ENCODE measurements at regions of chr9 and their contacts with region 1.

Region 1: GRCh38 chr9:87770616-87771315 is 44.8 kb downstream of the CTSL start:
- DNase-seq: no peak
- ATAC-seq: no peak
- H3K4me3 ChIP-seq: no peak overlapping the region
- H3K4me3 Mint-ChIP-seq: no peak overlapping the region
- H3K27ac ChIP-seq: no peak overlapping the region
- H3K27ac Mint-ChIP-seq: no peak overlapping the region
- H3K4me1 ChIP-seq: no peaks in the 10 kb centered on the region
- H3K4me1 Mint-ChIP-seq: no peaks in the 10 kb centered on the region
- H3K27me3 ChIP-seq: peaks cover 0 to 17% of the 10 kb centered on the region in 2 experiments
- H3K27me3 Mint-ChIP-seq: peaks cover 22% of the 10 kb centered on the region
- CTCF ChIP-seq: no peak

Region 2: DNA sequence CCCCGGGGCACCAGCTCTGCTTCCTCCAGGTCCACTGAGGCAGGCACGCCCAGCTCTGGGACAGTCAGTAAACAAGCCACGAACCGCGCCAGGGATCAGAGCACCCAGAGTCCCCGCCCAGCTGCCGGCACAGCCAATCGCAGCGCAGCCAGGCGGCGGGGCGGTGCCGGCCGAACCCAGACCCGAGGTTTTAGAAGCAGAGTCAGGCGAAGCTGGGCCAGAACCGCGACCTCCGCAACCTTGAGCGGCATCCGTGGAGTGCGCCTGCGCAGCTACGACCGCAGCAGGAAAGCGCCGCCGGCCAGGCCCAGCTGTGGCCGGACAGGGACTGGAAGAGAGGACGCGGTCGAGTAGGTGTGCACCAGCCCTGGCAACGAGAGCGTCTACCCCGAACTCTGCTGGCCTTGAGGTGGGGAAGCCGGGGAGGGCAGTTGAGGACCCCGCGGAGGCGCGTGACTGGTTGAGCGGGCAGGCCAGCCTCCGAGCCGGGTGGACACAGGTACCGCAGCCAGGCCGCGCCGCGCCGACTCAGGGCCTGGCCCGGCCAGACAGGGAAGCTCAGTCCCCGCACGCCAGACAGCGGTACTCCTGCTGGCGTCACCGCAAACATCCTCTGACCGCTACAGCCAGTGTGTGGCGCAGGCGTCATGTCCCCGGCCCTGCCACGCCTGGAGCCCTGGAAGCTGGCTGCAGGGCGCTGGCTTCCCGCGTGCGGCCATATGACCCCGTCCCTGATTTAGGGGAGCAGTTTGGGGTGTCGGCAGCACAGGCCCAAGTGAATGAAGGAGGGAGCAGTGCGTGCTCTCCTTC is 44.7 kb before region 1 on chr9 and contains the start of gene CTSL:
- CTCF ChIA-PET with region 1: no interaction called
- POLR2A ChIA-PET with region 1: no interaction called
- intact Hi-C with region 1: no loop called
- DNase-seq: peak; percentile 24 to 82 (median 62)
- ATAC-seq: peak; percentile 83
- H3K4me3 ChIP-seq: peak within 1 kb of the TSS; percentile 73
- H3K4me3 Mint-ChIP-seq: peak within 1 kb of the TSS; percentile 98
- H3K27ac ChIP-seq: peak within 1 kb of the TSS; percentile 25 to 52
- H3K27ac Mint-ChIP-seq: peak within 1 kb of the TSS; percentile 87
- H3K4me1 ChIP-seq: peaks cover 29% of the 10 kb centered on the region
- H3K4me1 Mint-ChIP-seq: peaks cover 59% of the 10 kb centered on the region
- H3K27me3 ChIP-seq: peaks cover 0 to 3% of the 10 kb centered on the region in 2 experiments
- H3K27me3 Mint-ChIP-seq: no peaks in the 10 kb centered on the region
- CTCF ChIP-seq: no peak
- total RNA-seq, gene CTSL: 7.5 to 7.9 TPM

Region 3: GRCh38 chr9:87740209-87740608 is 30.6 kb before region 1 on chr9:
- CTCF ChIA-PET with region 1: no interaction called
- POLR2A ChIA-PET with region 1: no interaction called
- intact Hi-C with region 1: loop called in 1 of 2 experiments (anchors 1 kb)
- DNase-seq: no peak
- ATAC-seq: no peak
- H3K4me3 ChIP-seq: no peak overlapping the region
- H3K4me3 Mint-ChIP-seq: no peak overlapping the region
- H3K27ac ChIP-seq: no peak overlapping the region
- H3K27ac Mint-ChIP-seq: no peak overlapping the region
- H3K4me1 ChIP-seq: no peaks in the 10 kb centered on the region
- H3K4me1 Mint-ChIP-seq: peaks cover 18% of the 10 kb centered on the region
- H3K27me3 ChIP-seq: no peaks in the 10 kb centered on the region
- H3K27me3 Mint-ChIP-seq: no peaks in the 10 kb centered on the region
- CTCF ChIP-seq: no peak

Region 4: DNA sequence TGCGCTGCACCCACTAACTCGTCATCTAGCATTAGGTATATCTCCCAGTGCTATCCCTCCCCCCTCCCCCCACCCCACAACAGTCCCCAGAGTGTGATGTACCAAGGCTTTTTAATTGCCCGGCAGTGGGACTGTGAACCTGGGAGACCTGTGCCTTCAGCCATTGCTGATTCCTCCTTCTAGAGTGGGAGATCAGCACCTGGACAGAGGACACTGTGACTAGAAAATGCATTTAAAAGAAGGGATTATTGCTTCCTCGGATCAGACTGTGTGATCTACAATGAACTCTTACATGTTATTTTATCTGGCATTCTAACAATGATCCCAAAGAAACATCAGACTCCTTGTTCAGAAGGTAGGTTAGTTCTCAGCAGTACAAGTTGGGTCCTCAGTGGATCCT is 18.9 kb before region 1 on chr9:
- CTCF ChIA-PET with region 1: no interaction called
- POLR2A ChIA-PET with region 1: no interaction called
- intact Hi-C with region 1: no loop called
- DNase-seq: no peak
- ATAC-seq: no peak
- H3K4me3 ChIP-seq: no peak overlapping the region
- H3K4me3 Mint-ChIP-seq: no peak overlapping the region
- H3K27ac ChIP-seq: no peak overlapping the region
- H3K27ac Mint-ChIP-seq: no peak overlapping the region
- H3K4me1 ChIP-seq: no peaks in the 10 kb centered on the region
- H3K4me1 Mint-ChIP-seq: no peaks in the 10 kb centered on the region
- H3K27me3 ChIP-seq: no peaks in the 10 kb centered on the region
- H3K27me3 Mint-ChIP-seq: peaks cover 11% of the 10 kb centered on the region
- CTCF ChIP-seq: no peak

Measured in CD4-positive, alpha-beta T cell (primary cell).